ENCODE measurements at regions of chr1 and their contacts with region 1.

Region 1: DNA sequence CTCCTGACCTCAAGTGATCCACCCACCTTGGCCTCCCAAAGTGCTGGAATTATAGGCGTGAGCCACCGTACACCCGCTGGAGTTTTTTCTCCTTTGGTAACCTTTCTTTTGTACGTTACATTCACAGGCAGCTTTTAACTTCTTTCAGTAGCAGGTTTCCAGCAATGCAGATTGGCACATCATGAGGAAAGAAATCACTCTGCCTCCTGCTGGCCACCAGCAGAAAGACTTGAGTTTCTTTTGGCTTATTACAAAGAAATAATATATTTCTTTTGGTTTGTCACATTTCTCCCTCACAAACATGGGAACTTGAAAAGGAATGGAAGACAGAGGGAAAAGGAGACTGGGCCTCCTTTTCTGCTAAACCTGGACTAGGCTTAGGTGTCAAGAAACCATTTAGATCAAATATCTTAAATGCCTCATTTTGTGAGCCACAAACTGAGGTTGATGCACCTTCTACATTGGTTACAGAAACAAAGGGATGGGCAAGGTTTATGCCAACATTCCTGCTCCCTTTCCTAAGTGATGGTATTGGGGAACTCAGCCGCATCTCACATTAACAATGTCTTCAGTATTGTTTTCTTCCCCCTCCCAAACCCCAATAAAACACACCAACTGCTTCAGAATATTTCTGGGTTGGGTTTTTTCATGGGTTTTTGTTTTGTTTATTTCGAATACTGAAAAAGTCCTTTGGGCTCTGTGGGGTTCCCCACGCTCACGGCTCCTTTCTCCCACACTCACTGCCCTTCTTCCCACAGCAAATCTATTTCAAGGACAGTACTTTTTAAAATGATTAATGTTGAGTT is 7.7 kb downstream of the ENSA start:
- DNase-seq: peak; percentile 26 to 80 (median 60)
- ATAC-seq: peak; percentile 73 to 81
- H3K4me3 Mint-ChIP-seq: peak overlapping the region in 6 of 10 donors; percentile 14 to 35 (median 27)
- H3K27ac Mint-ChIP-seq: peak overlapping the region; percentile 74 to 92 (median 86)
- H3K4me1 Mint-ChIP-seq: peaks cover 23 to 60% (median 52%) of the 10 kb centered on the region in 4 donors
- H3K27me3 Mint-ChIP-seq: no peaks in the 10 kb centered on the region

Region 2: DNA sequence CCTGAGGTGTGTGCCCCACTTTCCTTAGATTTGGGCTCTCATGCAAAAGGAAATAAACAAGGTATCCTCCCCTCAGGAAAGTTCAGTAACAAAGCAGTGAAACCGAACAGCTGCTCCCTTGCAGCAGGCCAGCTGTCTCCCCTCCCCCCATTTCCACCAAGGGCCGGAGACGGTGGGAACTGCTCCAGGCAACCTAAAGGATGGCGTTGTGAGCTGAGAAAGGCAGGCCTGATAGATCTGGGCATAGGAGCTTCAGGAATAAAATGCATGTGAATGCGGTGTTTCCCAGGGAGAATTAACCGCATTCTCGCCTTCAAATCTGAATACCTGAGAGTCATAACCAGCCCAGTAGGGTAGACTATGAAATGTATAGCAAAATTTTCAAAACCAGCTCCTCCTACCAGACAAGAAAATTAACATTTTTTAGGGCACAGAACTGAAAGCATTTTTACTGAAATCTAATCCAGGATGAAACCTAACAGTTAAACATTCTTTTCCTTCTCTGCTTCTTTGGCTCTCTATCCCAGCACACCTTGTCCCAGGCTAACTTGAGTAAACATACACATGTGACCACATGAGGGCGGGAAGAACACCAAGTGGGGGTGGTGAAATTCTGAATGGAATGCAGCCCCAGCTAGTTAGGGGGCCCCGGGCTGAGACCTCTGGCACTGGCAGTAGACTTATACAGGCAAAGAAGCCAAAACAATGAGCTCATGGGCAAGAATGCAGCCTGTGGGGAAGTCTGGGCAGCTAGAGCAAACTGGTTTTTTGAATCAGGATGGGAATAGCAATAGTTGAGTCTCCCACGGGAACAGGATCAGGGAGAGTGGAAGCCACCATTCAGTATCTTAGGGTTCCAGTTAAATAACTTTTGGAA is 53.7 kb before region 1 on chr1:
- POLR2A ChIA-PET with region 1: interaction called, 198 read pairs
- DNase-seq: peak in 4 of 10 donors; percentile 36 to 60 (median 46)
- ATAC-seq: peak; percentile 7 to 18
- H3K4me3 Mint-ChIP-seq: peak overlapping the region; percentile 77 to 99 (median 90)
- H3K27ac Mint-ChIP-seq: peak overlapping the region; percentile 91 to 99 (median 97)
- H3K4me1 Mint-ChIP-seq: peaks cover 41 to 96% (median 84%) of the 10 kb centered on the region in 4 donors
- H3K27me3 Mint-ChIP-seq: no peaks in the 10 kb centered on the region

Region 3: DNA sequence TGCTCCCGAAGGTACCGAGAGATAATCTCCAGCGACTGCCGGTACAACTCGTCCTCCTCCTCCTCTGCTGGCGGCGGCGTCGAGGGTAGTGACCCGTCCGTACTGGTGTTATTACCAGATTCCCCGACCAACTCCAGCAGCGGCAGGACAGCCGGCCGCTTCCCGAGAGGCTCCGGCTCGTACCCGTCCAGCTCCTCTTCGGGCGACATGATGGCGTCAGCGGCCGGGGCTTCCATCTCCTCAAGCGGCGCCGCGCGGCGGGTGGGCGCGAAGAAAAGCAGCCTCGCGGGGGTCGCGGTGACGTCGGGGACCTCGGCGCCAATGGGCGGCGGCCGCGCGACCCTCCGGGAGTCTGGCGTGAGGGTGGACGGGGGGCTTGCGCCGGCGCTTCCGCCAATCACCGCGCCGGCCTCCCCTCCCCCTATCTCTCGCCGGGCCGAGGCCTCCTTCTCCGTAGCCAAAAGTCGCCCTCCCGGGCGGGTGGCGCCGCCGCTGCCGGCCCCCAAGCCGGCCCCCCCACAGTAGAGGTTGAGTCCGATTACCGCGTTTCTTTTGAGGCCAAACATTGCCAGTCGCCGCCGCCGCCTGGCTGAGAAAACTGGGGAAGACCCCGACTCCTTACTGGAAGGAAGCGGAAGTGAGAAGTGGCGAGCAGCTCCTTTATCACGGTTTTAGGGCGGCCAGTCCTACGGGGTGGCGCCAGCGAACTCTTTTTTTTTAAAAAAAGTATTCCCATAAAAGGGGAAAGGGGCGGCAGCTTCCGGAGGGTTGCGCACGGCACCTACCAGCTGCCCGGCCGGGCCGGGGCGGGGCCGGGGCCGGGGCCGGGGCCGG is 42.5 kb before region 1 on chr1 and contains the start of gene MCL1:
- POLR2A ChIA-PET with region 1: interaction called, 71 read pairs
- DNase-seq: peak; percentile 73 to 94 (median 86)
- ATAC-seq: peak; percentile 71 to 75
- H3K4me3 Mint-ChIP-seq: peak within 1 kb of the TSS; percentile 94 to 99 (median 97)
- H3K27ac Mint-ChIP-seq: peak within 1 kb of the TSS; percentile 95 to 99 (median 98)
- H3K4me1 Mint-ChIP-seq: peaks cover 23 to 42% (median 35%) of the 10 kb centered on the region in 4 donors
- H3K27me3 Mint-ChIP-seq: no peaks in the 10 kb centered on the region
- polyA plus RNA-seq, gene MCL1: 125 to 170 (median 146) TPM